Ovary (tissue), 10 donors: ENCODE measurements at regions of chr12 and their contacts with region 1.

Region 1: DNA sequence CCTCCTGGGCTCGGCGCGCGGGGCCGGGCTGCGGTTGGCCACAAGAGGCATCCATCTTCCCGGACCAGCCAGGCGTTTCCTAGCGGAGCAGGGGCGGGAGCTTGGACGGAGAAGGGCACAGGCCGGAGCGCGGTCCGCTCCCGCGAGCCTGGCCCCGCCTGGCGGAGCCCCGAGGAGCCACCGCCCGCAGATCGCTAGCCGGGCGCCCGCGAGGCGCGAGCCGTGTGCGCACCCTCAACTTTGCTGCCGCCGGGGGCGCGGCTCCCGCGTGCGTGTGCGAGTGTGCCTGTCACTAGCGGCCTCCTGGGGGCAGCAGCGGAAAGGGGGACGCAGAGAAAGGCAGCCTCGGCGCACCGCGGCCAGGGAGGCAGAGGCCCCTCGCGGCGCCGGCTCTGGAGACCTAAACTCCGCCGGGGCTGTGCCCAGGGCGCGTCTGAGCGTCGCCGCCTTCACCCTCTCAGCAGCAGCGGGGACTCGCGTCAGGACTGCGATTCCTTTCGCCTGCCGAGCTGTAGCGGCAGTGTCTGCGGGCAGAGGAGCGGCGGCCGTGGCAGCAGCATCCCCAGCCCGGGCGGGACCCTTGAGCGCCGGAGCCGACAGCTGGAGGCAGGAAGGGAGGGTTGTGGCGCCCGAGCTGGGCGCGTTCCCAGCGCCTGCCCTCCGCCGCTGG is 644 bp upstream of the SRGAP1 start:
- DNase-seq: peak; percentile 93 to 96 (median 94)
- H3K4me3 ChIP-seq: peak overlapping the region; percentile 83
- H3K27ac ChIP-seq: peak overlapping the region; percentile 90 to 93
- H3K4me1 ChIP-seq: peaks cover 6% of the 10 kb centered on the region
- H3K27me3 ChIP-seq: no peaks in the 10 kb centered on the region
- CTCF ChIP-seq: peak; percentile 89 to 100 (median 99)
- EP300 ChIP-seq: no peak
- POLR2A ChIP-seq: peak; percentile 40

Region 2: GRCh38 chr12:63470161-63470560 is 373.7 kb before region 1 on chr12:
- intact Hi-C with region 1: no loop called
- DNase-seq: no peak
- H3K4me3 ChIP-seq: no peak overlapping the region
- H3K27ac ChIP-seq: no peak overlapping the region
- H3K4me1 ChIP-seq: no peaks in the 10 kb centered on the region
- H3K27me3 ChIP-seq: no peaks in the 10 kb centered on the region
- CTCF ChIP-seq: no peak
- EP300 ChIP-seq: no peak
- POLR2A ChIP-seq: no peak

Region 3: GRCh38 chr12:63930971-63931370 is 87.1 kb after region 1 on chr12:
- intact Hi-C with region 1: loop called in 1 of 4 experiments (anchors 10 kb)
- DNase-seq: no peak
- H3K4me3 ChIP-seq: no peak overlapping the region
- H3K27ac ChIP-seq: no peak overlapping the region
- H3K4me1 ChIP-seq: no peaks in the 10 kb centered on the region
- H3K27me3 ChIP-seq: no peaks in the 10 kb centered on the region
- CTCF ChIP-seq: no peak
- EP300 ChIP-seq: no peak
- POLR2A ChIP-seq: no peak

Region 4: GRCh38 chr12:64222009-64222765 is 378.3 kb after region 1 on chr12 and contains the start of gene KICS2:
- intact Hi-C with region 1: loop called in 1 of 4 experiments (anchors 10 kb)
- DNase-seq: peak; percentile 93 to 96 (median 94)
- H3K4me3 ChIP-seq: peak within 1 kb of the TSS; percentile 79
- H3K27ac ChIP-seq: peak within 1 kb of the TSS; percentile 54 to 94
- H3K4me1 ChIP-seq: no peaks in the 10 kb centered on the region
- H3K27me3 ChIP-seq: no peaks in the 10 kb centered on the region
- CTCF ChIP-seq: peak in 1 of 3 donors; percentile 27
- EP300 ChIP-seq: no peak
- POLR2A ChIP-seq: peak; percentile 92
- total RNA-seq, gene KICS2: 7.9 to 15.2 (median 8.2) TPM